ENCODE measurements at regions of chr1 and their contacts with region 1.

Region 1: DNA sequence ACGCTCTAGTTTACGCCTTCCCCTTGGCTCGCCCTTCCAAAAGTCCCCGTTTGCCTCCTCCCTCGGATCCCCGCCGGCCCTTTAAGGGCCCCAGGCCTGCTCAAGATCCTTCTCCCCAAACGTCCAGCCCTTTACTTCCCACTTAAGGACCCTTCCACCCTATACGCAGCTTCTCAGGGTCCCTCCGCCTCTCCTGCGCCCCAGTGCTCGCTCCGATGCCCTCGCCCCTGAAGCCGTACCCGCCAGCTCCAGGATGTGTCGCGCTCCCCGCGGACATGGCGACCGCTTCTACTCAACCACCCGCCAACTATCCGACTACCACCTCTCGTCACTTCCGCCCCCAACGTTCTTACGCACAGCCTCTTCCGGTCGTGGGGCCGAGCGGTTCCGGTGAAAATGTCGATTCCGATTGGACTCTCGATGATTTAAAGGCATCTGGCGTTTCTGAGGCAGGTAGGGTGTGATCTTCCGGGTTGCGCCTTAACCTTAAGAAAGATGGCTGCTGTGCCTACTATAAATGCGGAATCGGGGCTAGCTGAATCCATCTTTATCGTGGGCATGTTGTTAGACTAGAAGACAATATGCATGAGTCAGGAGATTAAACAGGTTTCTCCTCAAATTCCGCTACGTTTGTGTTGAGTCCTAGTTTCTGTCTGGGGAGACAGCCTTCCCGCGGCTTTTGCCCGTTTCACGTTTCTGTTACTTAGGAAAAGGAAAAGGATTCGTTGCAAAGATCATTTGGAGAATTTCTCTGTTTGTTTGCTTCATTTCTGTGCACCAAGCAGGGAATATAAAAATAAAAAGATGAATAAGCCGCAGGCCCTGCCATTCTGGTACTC is at the start of gene KHDC4:
- DNase-seq: peak; percentile 87
- H3K4me3 ChIP-seq: peak within 1 kb of the TSS; percentile 48 to 98 (median 82)
- H3K27ac ChIP-seq: peak within 1 kb of the TSS; percentile 93 to 98 (median 94)
- H3K4me1 ChIP-seq: peaks cover 22 to 69% (median 45%) of the 10 kb centered on the region in 3 donors
- H3K27me3 ChIP-seq: no peaks in the 10 kb centered on the region
- CTCF ChIP-seq: peak in 3 of 6 experiments; percentile 17 to 37 (median 26)
- POLR2A ChIP-seq: peak in 3 of 4 donors; percentile 95 to 97 (median 97)
- total RNA-seq, gene KHDC4: 12.4 to 48.1 (median 33.9) TPM

Region 2: DNA sequence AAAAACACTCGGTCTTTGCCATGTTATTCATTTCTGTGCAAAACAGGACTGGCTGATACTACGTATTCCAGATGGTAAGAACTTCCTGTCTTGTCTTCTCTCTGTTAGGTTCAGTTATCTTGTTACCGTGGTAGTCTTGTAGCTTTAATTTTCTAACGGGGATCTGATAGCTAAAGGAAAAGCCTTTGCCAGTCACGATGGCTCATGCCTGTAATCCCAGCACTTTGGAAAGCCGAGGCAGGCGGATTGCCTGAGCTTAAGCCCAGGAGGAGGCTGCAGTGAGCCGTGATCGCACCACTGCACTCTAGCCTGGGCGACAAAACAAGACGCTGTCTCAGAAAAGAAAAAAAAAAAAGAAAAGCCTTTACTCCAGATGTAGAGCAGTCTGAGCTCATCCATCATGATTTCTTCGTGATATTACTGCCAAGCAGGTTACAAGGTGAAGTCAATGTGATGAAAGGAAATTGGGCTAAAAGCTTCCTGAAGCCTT is 335.4 kb before region 1 on chr1:
- intact Hi-C with region 1: no loop called
- DNase-seq: no peak
- H3K4me3 ChIP-seq: peak overlapping the region in 1 of 4 donors; percentile 39
- H3K27ac ChIP-seq: no peak overlapping the region
- H3K4me1 ChIP-seq: peaks cover 4 to 20% (median 5%) of the 10 kb centered on the region in 3 donors
- H3K27me3 ChIP-seq: peaks cover 0 to 5% (median 0%) of the 10 kb centered on the region in 4 donors
- CTCF ChIP-seq: no peak
- POLR2A ChIP-seq: no peak

Region 3: DNA sequence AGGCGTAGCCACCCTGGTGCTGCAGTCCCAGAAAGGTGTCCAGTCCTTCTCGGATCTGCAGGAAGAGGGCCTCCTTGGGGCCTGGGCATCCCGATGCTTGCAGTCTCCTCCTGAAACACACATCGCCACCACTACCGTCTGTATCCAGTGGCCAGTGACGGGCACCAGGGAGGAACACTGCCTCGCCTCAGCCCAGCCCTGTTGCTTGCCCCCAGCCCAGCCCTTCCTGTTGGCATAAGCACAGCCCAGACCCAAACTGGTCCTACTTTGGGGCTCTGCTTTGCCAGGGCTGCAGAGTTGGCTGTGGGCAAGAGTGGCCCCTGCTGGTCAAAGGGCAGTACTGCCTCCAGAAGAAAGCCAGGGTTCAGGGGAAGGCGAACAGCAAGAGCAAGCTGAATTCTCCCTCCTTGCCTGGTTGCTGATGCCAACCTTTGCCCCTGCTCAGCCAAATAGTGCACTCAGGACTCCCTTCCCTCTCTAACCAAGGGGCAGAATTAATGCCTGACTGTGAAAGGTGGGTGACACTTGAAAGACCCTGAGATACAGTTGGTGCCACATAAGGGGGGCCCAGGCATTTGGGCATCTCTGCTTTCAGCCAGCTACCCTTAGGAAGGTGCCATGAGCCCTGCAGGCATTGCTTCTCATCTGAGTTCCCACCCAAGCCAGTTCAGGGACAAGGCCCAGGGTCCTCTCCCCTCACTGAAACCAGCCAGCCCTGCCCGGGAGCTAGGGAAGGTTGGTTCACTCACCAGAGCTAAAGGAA is 55.1 kb after region 1 on chr1:
- intact Hi-C with region 1: loop called (anchors 5 kb)
- DNase-seq: peak; percentile 35
- H3K4me3 ChIP-seq: peak overlapping the region in 3 of 4 donors; percentile 31 to 61 (median 39)
- H3K27ac ChIP-seq: peak overlapping the region in 3 of 4 donors; percentile 51 to 79 (median 71)
- H3K4me1 ChIP-seq: peaks cover 3 to 41% (median 3%) of the 10 kb centered on the region in 3 donors
- H3K27me3 ChIP-seq: no peaks in the 10 kb centered on the region
- CTCF ChIP-seq: peak; percentile 95 to 99 (median 98)
- POLR2A ChIP-seq: no peak

Region 4: GRCh38 chr1:156054500-156055280 is 120.4 kb after region 1 on chr1 and contains the start of gene LAMTOR2:
- intact Hi-C with region 1: loop called (anchors 10 kb)
- DNase-seq: peak; percentile 88
- H3K4me3 ChIP-seq: peak within 1 kb of the TSS; percentile 84 to 95 (median 88)
- H3K27ac ChIP-seq: peak within 1 kb of the TSS; percentile 95 to 98 (median 96)
- H3K4me1 ChIP-seq: peaks cover 0 to 40% (median 11%) of the 10 kb centered on the region in 3 donors
- H3K27me3 ChIP-seq: no peaks in the 10 kb centered on the region
- CTCF ChIP-seq: peak in 1 of 6 experiments; percentile 17
- POLR2A ChIP-seq: peak in 3 of 4 donors; percentile 32 to 63 (median 41)
- total RNA-seq, gene LAMTOR2: 41.4 to 67.1 (median 53.3) TPM